Naive thymus-derived CD4-positive, alpha-beta T cell (primary cell): ENCODE measurements at regions of chr11 and their contacts with region 1.

Region 1: DNA sequence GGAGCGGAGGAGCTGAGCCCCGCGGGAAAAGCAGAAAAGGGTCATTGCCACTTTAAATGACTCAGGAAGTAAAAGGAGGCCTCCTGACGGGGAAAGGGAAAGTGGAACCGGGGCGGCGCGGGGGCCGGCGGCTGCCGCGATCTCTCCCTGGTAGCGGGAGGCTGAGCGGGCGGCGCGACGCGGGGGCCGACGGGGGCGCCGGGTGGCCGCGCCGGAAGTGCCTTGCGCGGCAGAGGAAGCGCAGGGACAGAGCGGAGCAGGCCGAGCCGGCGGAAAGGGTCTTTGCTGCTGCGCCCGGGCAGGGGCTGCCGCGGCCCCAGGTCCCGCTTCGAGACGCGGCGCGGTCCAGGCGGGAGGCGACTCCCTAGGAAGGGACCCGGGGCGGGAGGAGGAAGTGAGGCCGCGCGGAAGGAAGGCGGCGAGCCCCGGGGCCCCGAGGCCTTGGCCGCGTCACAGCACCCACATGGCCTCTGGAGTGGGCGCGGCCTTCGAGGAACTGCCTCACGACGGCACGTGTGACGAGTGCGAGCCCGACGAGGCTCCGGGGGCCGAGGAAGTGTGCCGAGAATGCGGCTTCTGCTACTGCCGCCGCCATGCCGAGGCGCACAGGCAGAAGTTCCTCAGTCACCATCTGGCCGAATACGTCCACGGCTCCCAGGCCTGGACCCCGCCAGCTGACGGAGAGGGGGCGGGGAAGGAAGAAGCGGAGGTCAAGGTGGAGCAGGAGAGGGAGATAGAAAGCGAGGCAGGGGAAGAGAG is at the start of gene TRIM44:
- DNase-seq: peak; percentile 69 to 85 (median 82)
- ATAC-seq: peak; percentile 89
- H3K4me3 ChIP-seq: peak within 1 kb of the TSS; percentile 94
- H3K4me3 Mint-ChIP-seq: peak within 1 kb of the TSS; percentile 91 to 99 (median 95)
- H3K27ac ChIP-seq: peak within 1 kb of the TSS; percentile 94
- H3K27ac Mint-ChIP-seq: peak within 1 kb of the TSS; percentile 90 to 100 (median 96)
- H3K4me1 ChIP-seq: peaks cover 21 to 22% of the 10 kb centered on the region in 2 donors
- H3K4me1 Mint-ChIP-seq: peaks cover 24 to 61% (median 55%) of the 10 kb centered on the region in 7 donors
- H3K27me3 ChIP-seq: no peaks in the 10 kb centered on the region
- H3K27me3 Mint-ChIP-seq: peaks cover 0 to 22% (median 5%) of the 10 kb centered on the region in 5 donors
- total RNA-seq, gene TRIM44: 35.7 to 60.8 (median 58.6) TPM

Region 2: GRCh38 chr11:34438529-34439507 is 1224.0 kb before region 1 on chr11 and contains the start of gene CAT:
- CTCF ChIA-PET with region 1: no interaction called
- POLR2A ChIA-PET with region 1: no interaction called
- intact Hi-C with region 1: loop called in 1 of 2 experiments (anchors 2 kb)
- DNase-seq: peak; percentile 94 to 98 (median 97)
- ATAC-seq: peak; percentile 98
- H3K4me3 ChIP-seq: peak within 1 kb of the TSS; percentile 90
- H3K4me3 Mint-ChIP-seq: peak within 1 kb of the TSS; percentile 88 to 98 (median 96)
- H3K27ac ChIP-seq: peak within 1 kb of the TSS; percentile 79
- H3K27ac Mint-ChIP-seq: peak within 1 kb of the TSS; percentile 89 to 97 (median 93)
- H3K4me1 ChIP-seq: peaks cover 7 to 19% of the 10 kb centered on the region in 2 donors
- H3K4me1 Mint-ChIP-seq: peaks cover 21 to 47% (median 35%) of the 10 kb centered on the region in 7 donors
- H3K27me3 ChIP-seq: no peaks in the 10 kb centered on the region
- H3K27me3 Mint-ChIP-seq: no peaks in the 10 kb centered on the region
- total RNA-seq, gene CAT: 23.3 to 55.9 (median 42.6) TPM

Region 3: DNA sequence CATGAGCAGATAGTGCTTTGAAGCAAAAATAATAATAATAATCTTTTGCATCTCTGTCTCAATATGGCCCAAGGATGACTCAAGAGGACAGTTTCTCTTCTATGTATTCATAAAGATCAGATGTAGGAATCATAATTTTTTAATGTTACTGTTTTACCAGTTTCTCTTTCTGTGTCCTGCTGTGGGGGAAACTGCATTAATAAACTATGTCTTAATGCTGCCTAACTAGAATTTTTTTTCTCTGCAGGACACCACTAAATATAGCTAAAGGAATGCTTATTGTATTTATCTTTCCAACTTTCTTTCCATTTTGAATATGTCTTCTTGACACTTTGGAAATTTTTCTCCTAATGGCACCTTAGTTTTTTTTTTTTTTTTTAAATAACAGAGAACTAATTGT is 38.0 kb before region 1 on chr11:
- CTCF ChIA-PET with region 1: no interaction called
- POLR2A ChIA-PET with region 1: no interaction called
- intact Hi-C with region 1: no loop called
- DNase-seq: no peak
- ATAC-seq: no peak
- H3K4me3 ChIP-seq: no peak overlapping the region
- H3K4me3 Mint-ChIP-seq: no peak overlapping the region
- H3K27ac ChIP-seq: no peak overlapping the region
- H3K27ac Mint-ChIP-seq: no peak overlapping the region
- H3K4me1 ChIP-seq: peaks cover 0 to 4% of the 10 kb centered on the region in 2 donors
- H3K4me1 Mint-ChIP-seq: peaks cover 0 to 8% (median 4%) of the 10 kb centered on the region in 7 donors
- H3K27me3 ChIP-seq: peaks cover 0 to 10% of the 10 kb centered on the region in 2 donors
- H3K27me3 Mint-ChIP-seq: peaks cover 71 to 87% (median 85%) of the 10 kb centered on the region in 5 donors

Region 4: DNA sequence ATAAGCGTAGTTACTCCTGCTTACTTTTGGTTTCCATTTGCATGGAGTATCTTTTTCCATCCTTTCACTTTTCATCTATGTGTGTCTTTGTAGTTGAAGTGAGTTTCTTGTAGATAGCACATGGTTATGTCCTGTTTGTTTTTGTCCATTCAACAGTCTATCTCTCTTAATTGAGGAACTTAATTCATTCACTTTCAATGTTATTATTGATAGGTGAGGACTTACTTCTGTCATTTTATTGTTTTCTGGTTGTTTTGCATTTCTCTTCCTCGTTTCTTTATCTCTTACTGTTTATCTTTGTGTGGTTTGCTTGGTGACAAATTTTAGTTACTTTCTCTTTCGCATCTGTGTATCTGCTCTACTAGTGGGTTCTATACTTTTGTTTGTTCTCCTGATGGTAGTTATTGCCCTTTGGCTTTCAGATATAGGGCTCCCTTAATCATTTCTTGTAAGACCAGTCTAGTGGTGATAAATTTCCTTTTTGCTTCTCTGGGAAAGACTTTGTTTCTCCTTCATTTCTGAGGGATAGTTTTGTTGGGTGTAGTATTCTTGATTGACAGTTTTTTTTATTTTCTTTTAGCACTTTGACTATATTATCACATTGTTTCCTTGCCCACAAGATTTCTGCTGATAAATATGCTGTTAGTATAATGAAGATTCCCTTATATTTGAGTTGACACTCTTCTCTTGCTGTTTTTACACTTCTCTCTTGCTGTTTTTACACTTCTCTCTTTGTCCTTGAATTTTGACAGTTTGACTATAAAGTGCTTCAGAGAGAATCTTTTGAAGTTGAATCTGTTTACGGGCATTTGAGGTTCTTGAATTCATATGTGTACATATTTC is 896.0 kb after region 1 on chr11:
- CTCF ChIA-PET with region 1: no interaction called
- POLR2A ChIA-PET with region 1: no interaction called
- intact Hi-C with region 1: loop called in 1 of 2 experiments (anchors 5 kb)
- DNase-seq: no peak
- ATAC-seq: peak; percentile 76
- H3K4me3 ChIP-seq: no peak overlapping the region
- H3K4me3 Mint-ChIP-seq: peak overlapping the region in 7 of 10 donors; percentile 3 to 74 (median 32)
- H3K27ac ChIP-seq: no peak overlapping the region
- H3K27ac Mint-ChIP-seq: peak overlapping the region in 2 of 9 donors; percentile 0 to 90
- H3K4me1 ChIP-seq: peaks cover 0 to 18% of the 10 kb centered on the region in 2 donors
- H3K4me1 Mint-ChIP-seq: peaks cover 0 to 27% (median 14%) of the 10 kb centered on the region in 7 donors
- H3K27me3 ChIP-seq: no peaks in the 10 kb centered on the region
- H3K27me3 Mint-ChIP-seq: peaks cover under 1 to 21% (median 10%) of the 10 kb centered on the region in 5 donors